ENCODE measurements at regions of chr1 and their contacts with region 1.

Region 1: GRCh38 chr1:27671964-27672749 is at the start of gene IFI6:
- ATAC-seq: peak; percentile 93 to 99 (median 97)
- H3K4me3 ChIP-seq: peak within 1 kb of the TSS; percentile 10 to 35 (median 33)
- H3K27ac ChIP-seq: peak within 1 kb of the TSS in 1 of 2 donors; percentile 41
- H3K4me1 ChIP-seq: peaks cover 0 to 5% of the 10 kb centered on the region in 2 donors
- total RNA-seq, gene IFI6: 7.4 to 3,288 (median 15.3) TPM

Region 2: GRCh38 chr1:27284425-27285273 is 387.5 kb before region 1 on chr1:
- in situ Hi-C with region 1: no loop called
- ATAC-seq: peak; percentile 80 to 95 (median 89)
- H3K4me3 ChIP-seq: no peak overlapping the region
- H3K27ac ChIP-seq: no peak overlapping the region
- H3K4me1 ChIP-seq: no peaks in the 10 kb centered on the region

Region 3: DNA sequence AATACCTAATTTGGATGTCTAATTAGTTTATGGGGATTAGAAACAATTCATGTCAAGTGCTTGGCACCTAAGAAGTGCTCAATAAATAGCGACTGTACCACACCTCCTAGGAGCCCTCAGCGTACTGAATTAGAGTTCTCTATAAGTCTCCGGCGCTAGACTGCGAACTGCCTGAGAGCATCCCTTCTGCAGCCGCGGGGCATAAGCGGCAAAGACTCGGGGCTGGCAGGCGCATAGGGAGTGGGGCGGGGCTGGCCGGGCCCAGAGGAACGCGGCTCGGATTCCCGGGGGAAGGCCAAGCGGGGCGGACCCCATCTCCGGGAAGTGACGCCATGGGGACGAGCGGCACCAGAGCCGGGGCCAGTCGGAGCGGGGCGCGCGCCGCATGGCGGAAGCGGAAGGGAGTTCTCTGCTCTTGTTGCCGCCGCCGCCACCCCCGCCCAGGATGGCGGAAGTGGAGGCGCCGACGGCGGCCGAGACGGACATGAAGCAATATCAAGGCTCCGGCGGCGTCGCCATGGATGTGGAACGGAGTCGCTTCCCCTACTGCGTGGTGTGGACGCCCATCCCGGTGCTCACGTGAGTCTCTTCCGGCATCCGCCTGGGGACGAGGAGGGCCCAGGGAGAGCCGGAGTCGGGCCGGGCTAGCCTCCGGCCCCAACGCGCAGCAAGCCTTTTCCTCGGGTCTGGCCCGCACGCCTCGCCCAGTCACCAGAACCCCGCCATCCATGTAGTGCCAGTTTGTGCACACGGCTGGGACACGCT is 350.2 kb before region 1 on chr1 and contains the start of gene TMEM222:
- in situ Hi-C with region 1: loop called in 1 of 9 experiments (anchors 25 kb)
- ATAC-seq: peak; percentile 91 to 97 (median 94)
- H3K4me3 ChIP-seq: peak within 1 kb of the TSS; percentile 66 to 97 (median 91)
- H3K27ac ChIP-seq: peak within 1 kb of the TSS; percentile 93 to 95
- H3K4me1 ChIP-seq: peaks cover 24 to 29% of the 10 kb centered on the region in 2 donors
- total RNA-seq, gene TMEM222: 27.0 to 57.4 (median 38.0) TPM

Region 4: DNA sequence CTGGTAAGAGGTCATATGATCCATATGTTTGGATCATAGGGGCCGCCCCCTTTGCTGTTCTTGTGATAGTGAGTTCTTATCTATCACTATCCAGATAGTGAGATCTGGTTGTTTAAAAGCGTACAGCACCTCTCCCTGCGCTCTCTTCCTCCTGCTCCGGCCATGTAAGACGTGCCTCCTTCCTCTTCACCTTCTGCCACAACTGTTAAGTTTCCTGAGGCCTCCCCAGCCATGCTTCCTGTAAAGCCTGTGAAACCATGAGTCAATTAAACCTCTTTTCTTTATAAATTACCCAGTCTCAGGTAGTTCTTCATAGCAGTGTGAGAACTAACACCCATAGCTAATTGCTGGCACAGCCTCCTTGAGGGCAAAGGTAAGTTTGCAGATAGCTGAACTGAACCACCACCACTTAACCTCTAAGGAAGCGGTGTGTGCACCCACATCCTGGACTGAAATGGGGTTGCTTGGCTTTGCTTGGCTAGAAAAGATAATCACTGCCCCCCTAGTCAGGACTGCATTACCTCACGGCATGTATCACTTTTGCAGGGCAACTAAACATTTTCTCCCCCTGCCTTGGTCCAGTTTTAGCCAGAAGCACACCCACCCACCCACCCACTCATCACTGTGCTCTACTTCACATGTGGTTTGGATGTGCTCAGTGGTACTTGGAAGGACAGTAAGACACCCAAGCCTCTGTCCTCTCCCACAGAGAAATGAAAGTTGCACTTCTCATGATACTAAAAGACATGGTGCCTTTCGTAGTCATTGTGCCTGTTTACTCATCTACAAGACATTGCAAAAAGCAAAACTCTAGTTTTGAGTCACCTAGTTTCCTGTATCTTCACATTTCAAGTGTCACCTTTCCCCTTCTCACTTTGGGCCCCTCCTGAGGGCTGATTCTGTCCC is 527.4 kb after region 1 on chr1:
- in situ Hi-C with region 1: no loop called
- ATAC-seq: no peak
- H3K4me3 ChIP-seq: no peak overlapping the region
- H3K27ac ChIP-seq: no peak overlapping the region
- H3K4me1 ChIP-seq: no peaks in the 10 kb centered on the region